ENCODE measurements at regions of chr1 and their contacts with region 1.

Region 1: DNA sequence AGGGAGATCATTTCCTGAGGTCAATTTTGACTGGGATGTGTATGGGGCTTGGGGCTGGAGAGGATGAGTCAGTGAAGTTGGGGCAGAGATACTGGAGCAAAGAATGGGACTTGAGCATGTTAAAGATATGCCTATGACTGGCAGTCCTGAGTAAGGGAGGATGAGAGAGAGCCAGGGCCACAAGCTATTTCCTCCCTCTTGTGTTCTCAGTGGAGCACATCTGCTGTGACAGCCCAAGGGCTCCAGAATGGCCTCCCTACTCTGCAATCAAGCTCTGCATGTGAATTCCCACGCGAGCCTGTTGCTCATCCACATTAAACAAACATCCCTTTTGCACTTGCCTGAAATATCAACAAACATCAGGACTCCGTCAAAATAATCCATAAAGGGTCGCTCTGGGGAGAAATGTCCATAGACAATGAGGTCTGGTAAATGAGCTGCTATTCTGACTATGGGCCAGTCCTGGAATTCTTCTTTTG is 9.2 kb downstream of the ADCY10 start:
- DNase-seq: no peak
- ATAC-seq: no peak
- H3K4me3 ChIP-seq: no peak overlapping the region
- H3K4me3 Mint-ChIP-seq: no peak overlapping the region
- H3K27ac ChIP-seq: no peak overlapping the region
- H3K27ac Mint-ChIP-seq: no peak overlapping the region
- H3K4me1 ChIP-seq: no peaks in the 10 kb centered on the region
- H3K4me1 Mint-ChIP-seq: no peaks in the 10 kb centered on the region
- H3K27me3 ChIP-seq: no peaks in the 10 kb centered on the region
- H3K27me3 Mint-ChIP-seq: peaks cover 0 to 3% of the 10 kb centered on the region in 2 donors

Region 2: GRCh38 chr1:167566766-167567165 is 337.9 kb before region 1 on chr1:
- CTCF ChIA-PET with region 1: no interaction called
- POLR2A ChIA-PET with region 1: no interaction called
- DNase-seq: no peak
- ATAC-seq: no peak
- H3K4me3 ChIP-seq: no peak overlapping the region
- H3K4me3 Mint-ChIP-seq: no peak overlapping the region
- H3K27ac ChIP-seq: no peak overlapping the region
- H3K27ac Mint-ChIP-seq: no peak overlapping the region
- H3K4me1 ChIP-seq: no peaks in the 10 kb centered on the region
- H3K4me1 Mint-ChIP-seq: no peaks in the 10 kb centered on the region
- H3K27me3 ChIP-seq: peaks cover 0 to 8% of the 10 kb centered on the region in 2 experiments
- H3K27me3 Mint-ChIP-seq: peaks cover 0 to 2% of the 10 kb centered on the region in 2 donors

Region 3: GRCh38 chr1:167871331-167871730 is 33.4 kb before region 1 on chr1:
- CTCF ChIA-PET with region 1: no interaction called
- POLR2A ChIA-PET with region 1: interaction called in 1 of 2 experiments, 13 read pairs
- DNase-seq: no peak
- ATAC-seq: no peak
- H3K4me3 ChIP-seq: no peak overlapping the region
- H3K4me3 Mint-ChIP-seq: no peak overlapping the region
- H3K27ac ChIP-seq: no peak overlapping the region
- H3K27ac Mint-ChIP-seq: no peak overlapping the region
- H3K4me1 ChIP-seq: no peaks in the 10 kb centered on the region
- H3K4me1 Mint-ChIP-seq: no peaks in the 10 kb centered on the region
- H3K27me3 ChIP-seq: no peaks in the 10 kb centered on the region
- H3K27me3 Mint-ChIP-seq: no peaks in the 10 kb centered on the region

Region 4: GRCh38 chr1:167881786-167882185 is 22.9 kb before region 1 on chr1:
- CTCF ChIA-PET with region 1: no interaction called
- POLR2A ChIA-PET with region 1: no interaction called
- DNase-seq: no peak
- ATAC-seq: no peak
- H3K4me3 ChIP-seq: no peak overlapping the region
- H3K4me3 Mint-ChIP-seq: no peak overlapping the region
- H3K27ac ChIP-seq: no peak overlapping the region
- H3K27ac Mint-ChIP-seq: no peak overlapping the region
- H3K4me1 ChIP-seq: no peaks in the 10 kb centered on the region
- H3K4me1 Mint-ChIP-seq: no peaks in the 10 kb centered on the region
- H3K27me3 ChIP-seq: peaks cover 0 to 2% of the 10 kb centered on the region in 2 experiments
- H3K27me3 Mint-ChIP-seq: peaks cover 1 to 4% of the 10 kb centered on the region in 2 donors

Region 5: DNA sequence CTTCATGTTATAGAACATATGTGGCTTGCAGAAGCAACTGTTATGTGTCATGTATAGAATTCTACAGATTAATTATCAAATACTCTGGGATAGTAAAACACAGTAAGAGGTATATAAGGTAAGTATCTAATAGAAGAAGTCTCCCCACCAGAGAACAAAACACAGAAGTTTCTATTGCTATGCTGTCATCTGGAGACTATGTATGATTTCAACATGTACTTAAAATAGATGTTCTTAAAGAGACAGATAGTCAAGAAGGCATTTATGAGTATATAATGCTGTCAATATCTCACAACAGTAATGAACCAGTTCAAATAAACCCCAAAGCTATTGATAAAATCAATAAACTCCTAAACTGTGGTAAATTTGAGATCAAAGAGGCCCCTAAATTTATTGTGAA is 17.3 kb after region 1 on chr1:
- CTCF ChIA-PET with region 1: no interaction called
- POLR2A ChIA-PET with region 1: no interaction called
- DNase-seq: no peak
- ATAC-seq: no peak
- H3K4me3 ChIP-seq: no peak overlapping the region
- H3K4me3 Mint-ChIP-seq: no peak overlapping the region
- H3K27ac ChIP-seq: no peak overlapping the region
- H3K27ac Mint-ChIP-seq: no peak overlapping the region
- H3K4me1 ChIP-seq: no peaks in the 10 kb centered on the region
- H3K4me1 Mint-ChIP-seq: peaks cover 14 to 21% (median 16%) of the 10 kb centered on the region in 3 donors
- H3K27me3 ChIP-seq: no peaks in the 10 kb centered on the region
- H3K27me3 Mint-ChIP-seq: no peaks in the 10 kb centered on the region